A549 (cell line): ENCODE measurements at regions of chr6 and their contacts with region 1.

Region 1: GRCh38 chr6:109382576-109383437 is 540 bp upstream of the CD164 start:
- DNase-seq: peak; percentile 84 to 94
- ATAC-seq: peak; percentile 90 to 92
- H3K4me3 ChIP-seq: peak overlapping the region; percentile 97
- H3K27ac ChIP-seq: peak overlapping the region; percentile 97 to 100
- H3K4me1 ChIP-seq: peaks cover 34% of the 10 kb centered on the region; the same call in 2 of the 3 replicates
- CTCF ChIP-seq: peak; percentile 68
- EP300 ChIP-seq: no peak
- POLR2A ChIP-seq: no peak
- RAD21 ChIP-seq: peak; percentile 63 to 70

Region 2: DNA sequence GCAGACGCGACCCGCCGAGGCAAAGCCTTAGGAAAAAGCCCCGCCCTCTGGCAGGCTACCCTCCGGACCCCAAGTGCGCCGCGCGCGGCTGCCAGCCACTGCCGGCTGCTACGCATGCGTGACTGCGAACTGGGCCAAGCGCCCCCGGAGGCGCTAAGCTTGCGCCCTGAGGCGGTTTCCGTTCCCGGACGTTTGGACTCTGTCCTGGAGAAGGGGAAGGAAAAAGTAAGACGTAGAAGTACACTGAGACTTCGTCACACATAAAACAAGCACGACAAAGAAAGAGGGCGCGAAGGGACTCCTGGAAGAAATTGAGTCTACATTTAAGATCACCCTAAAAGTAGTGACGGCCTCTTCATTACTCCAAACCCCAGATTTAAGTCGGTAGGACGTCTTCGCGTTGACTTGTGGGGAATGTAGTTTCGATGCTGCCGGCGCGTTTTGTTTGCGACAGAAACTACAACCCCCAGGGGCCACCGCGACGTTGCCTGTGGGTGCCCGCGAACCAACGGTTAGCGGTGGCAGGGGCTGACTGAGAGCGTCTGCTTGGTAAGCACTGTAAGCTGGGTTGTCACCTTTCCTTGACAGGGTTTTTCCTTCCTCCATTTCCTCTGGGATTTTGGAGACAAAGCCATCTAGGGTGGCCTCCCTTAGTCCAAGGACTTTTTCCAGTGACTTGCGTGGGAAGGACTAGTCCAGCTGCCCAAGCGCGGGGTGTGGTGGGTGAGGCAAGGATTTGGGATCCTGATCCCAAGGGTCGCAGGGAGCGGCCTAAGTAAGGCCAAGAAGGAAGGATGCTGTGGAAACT is 287.6 kb before region 1 on chr6 and contains the start of gene CEP57L1:
- CTCF ChIA-PET with region 1: interaction called, 4 read pairs
- POLR2A ChIA-PET with region 1: interaction called, 17 read pairs
- DNase-seq: peak; percentile 76 to 95
- ATAC-seq: peak; percentile 82 to 83
- H3K4me3 ChIP-seq: peak within 1 kb of the TSS; percentile 71
- H3K27ac ChIP-seq: peak within 1 kb of the TSS; percentile 88 to 89
- H3K4me1 ChIP-seq: peaks cover 22% of the 10 kb centered on the region
- CTCF ChIP-seq: no peak
- EP300 ChIP-seq: no peak
- POLR2A ChIP-seq: 0 out of 2 replicates have a peak, but pooled peaks have one; percentile 39
- RAD21 ChIP-seq: no peak
- polyA plus RNA-seq, gene CEP57L1: 16.4 and 20.5 TPM in 2 replicates

Region 3: GRCh38 chr6:109187399-109188114 is 195.2 kb before region 1 on chr6:
- CTCF ChIA-PET with region 1: interaction called, 50 read pairs
- POLR2A ChIA-PET with region 1: interaction called, 7 read pairs
- DNase-seq: peak; percentile 7 to 43
- ATAC-seq: peak; percentile 59 to 75; a peak in 3 of 6 replicates
- H3K4me3 ChIP-seq: no peak overlapping the region
- H3K27ac ChIP-seq: no peak overlapping the region
- H3K4me1 ChIP-seq: no peaks in the 10 kb centered on the region
- CTCF ChIP-seq: peak; percentile 77
- EP300 ChIP-seq: no peak
- POLR2A ChIP-seq: no peak
- RAD21 ChIP-seq: peak; percentile 86 to 90

Region 4: DNA sequence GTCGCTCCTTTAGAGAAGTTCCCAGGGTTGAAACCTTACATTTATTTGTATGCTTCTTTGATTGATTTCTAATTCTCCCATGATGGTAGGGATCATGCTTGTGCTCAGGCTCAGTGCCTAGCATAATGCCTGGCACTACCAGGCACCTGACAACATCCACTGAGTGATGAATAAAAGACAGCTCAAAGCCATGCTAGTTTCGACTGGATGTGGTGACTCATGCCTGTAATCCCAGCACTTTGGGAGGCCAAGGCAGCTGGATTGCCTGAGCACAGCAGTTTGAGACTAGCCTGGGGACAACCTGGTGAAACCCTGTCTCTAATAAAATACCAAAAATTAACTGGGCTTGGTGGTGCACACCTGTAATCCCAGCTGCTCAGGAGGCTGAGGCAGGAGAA is 11.1 kb after region 1 on chr6:
- CTCF ChIA-PET with region 1: interaction called, 23 read pairs
- POLR2A ChIA-PET with region 1: no interaction called
- DNase-seq: no peak
- ATAC-seq: no peak; a peak in 1 of 6 replicates
- H3K4me3 ChIP-seq: no peak overlapping the region
- H3K27ac ChIP-seq: no peak overlapping the region
- H3K4me1 ChIP-seq: no peaks in the 10 kb centered on the region
- CTCF ChIP-seq: no peak
- EP300 ChIP-seq: no peak
- POLR2A ChIP-seq: no peak
- RAD21 ChIP-seq: no peak

Region 5: GRCh38 chr6:109440331-109441068 is 57.7 kb after region 1 on chr6 and contains the starts of genes PPIL6 and SMPD2:
- CTCF ChIA-PET with region 1: interaction called, 5 read pairs
- POLR2A ChIA-PET with region 1: interaction called, 16 read pairs
- DNase-seq: peak; percentile 57 to 83
- ATAC-seq: peak; percentile 81 to 88
- H3K4me3 ChIP-seq: peak within 1 kb of the TSS; percentile 76
- H3K27ac ChIP-seq: peak within 1 kb of the TSS; percentile 81 to 96
- H3K4me1 ChIP-seq: peaks cover 8% of the 10 kb centered on the region
- CTCF ChIP-seq: peak; percentile 27; the same call in 2 of the 3 replicates
- EP300 ChIP-seq: no peak
- POLR2A ChIP-seq: peak; percentile 57
- RAD21 ChIP-seq: no peak
- polyA plus RNA-seq, gene PPIL6: 4.4 and 5.0 TPM in 2 replicates
- polyA plus RNA-seq, gene SMPD2: 9.6 and 13.1 TPM in 2 replicates